Head of caudate nucleus (tissue), 42 donors: ENCODE measurements at regions of chr12 and their contacts with region 1.

Region 1: GRCh38 chr12:46332260-46332659 is 40.3 kb downstream of the SLC38A2 start:
- DNase-seq: no peak

Region 2: DNA sequence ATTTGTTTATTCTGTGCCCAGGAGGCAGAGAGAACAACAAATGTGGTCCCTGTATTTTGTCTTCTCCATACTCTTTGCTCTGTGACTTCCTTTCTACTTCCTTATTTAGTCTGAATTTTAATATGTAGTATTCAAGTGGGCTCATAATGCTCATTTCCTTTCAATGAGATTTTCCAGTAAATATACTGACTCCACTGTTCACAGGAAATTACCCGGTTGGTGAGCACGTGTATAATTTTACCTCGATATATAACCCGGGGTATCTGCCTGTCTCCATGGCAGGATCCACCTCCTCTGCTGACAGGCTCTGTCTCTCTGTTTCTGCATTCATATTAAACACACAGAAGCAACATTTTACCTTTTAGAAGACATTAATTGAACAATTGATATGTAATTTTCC is 327.6 kb after region 1 on chr12:
- intact Hi-C with region 1: loop called (anchors 10 kb)
- DNase-seq: no peak